PC-3 (cell line): ENCODE measurements at regions of chr18 and their contacts with region 1.

Region 1: DNA sequence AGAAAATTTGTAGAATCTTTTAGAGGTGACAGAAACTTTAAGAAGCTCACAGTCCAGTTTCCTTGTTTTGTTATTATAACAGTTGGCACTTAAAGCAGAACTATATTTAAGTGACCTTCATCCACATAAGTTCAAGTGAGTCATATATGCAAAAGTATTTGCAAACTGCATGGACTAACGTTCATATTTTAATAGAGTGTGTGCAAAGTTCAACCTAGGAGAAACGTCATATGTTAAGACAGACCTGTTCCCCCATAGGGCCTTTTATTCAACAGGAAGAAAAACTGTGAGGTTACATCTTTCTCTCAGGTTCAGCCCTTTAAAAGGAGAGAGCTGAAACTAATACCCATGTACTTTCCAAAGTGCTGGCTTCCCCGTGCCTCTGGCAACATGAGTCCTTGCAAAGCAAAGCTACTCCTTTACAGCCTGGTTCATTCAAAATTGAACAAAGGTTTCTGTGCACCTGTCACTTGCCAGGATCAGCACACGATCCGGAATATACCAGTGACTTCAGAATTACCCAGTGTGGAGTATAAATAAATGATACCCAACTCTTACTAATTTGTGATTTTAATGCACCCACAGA is 280.0 kb upstream of the RAB12 start:
- DNase-seq: peak; percentile 86
- ATAC-seq: peak; percentile 94
- H3K4me3 ChIP-seq: no peak overlapping the region
- H3K27ac ChIP-seq: peak overlapping the region; percentile 52
- H3K4me1 ChIP-seq: peaks cover 39% of the 10 kb centered on the region
- H3K27me3 ChIP-seq: no peaks in the 10 kb centered on the region
- CTCF ChIP-seq: no peak

Region 2: DNA sequence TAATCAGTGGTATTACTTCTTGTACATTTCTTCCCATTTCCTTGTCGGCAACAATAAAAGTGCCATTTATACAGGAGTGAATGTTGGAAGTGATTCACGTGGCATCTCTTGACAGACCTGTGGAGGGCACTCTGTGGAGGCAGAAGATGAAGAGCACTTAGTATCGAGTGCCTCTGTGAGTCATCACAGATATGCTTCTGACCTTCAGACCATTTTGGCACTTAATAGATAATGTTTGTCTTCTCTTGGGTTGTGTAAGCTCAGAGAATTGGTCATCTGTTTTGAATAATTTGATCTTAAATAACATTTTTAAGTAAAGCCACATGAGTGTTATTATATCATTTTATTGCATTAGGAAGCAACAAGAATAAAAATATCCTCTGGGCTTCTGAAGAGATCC is 456.7 kb before region 1 on chr18:
- CTCF ChIA-PET with region 1: no interaction called
- POLR2A ChIA-PET with region 1: no interaction called
- intact Hi-C with region 1: loop called (anchors 10 kb)
- DNase-seq: peak; percentile 79
- ATAC-seq: peak; percentile 82
- H3K4me3 ChIP-seq: no peak overlapping the region
- H3K27ac ChIP-seq: peak overlapping the region; percentile 83
- H3K4me1 ChIP-seq: peaks cover 33% of the 10 kb centered on the region
- H3K27me3 ChIP-seq: no peaks in the 10 kb centered on the region
- CTCF ChIP-seq: peak; percentile 72

Region 3: DNA sequence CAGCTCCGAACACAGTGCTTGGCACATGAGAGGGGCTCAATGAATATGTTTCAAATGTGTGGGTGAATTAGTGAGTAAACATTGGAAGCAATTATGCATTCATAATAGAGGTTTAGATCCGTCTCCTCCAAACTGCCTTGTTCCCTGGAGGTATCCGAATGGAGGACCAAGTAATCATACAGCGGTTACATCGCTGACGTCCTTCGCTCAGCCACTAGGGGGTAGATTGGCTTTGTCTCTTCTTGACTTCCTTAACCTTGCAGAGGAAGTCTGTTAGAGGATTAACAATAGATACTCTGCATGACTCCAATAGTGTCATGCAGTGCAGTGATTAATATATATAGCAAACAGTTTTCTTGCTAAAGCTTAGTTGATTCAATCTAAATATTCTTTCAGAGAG is 245.1 kb before region 1 on chr18:
- CTCF ChIA-PET with region 1: no interaction called
- POLR2A ChIA-PET with region 1: interaction called, 6 read pairs
- intact Hi-C with region 1: loop called (anchors 10 kb)
- DNase-seq: peak; percentile 82
- ATAC-seq: peak; percentile 97
- H3K4me3 ChIP-seq: no peak overlapping the region
- H3K27ac ChIP-seq: no peak overlapping the region
- H3K4me1 ChIP-seq: peaks cover 4% of the 10 kb centered on the region; the same call in 1 of the 2 replicates
- H3K27me3 ChIP-seq: no peaks in the 10 kb centered on the region
- CTCF ChIP-seq: peak; percentile 93

Region 4: GRCh38 chr18:8116346-8117005 is 212.8 kb before region 1 on chr18:
- CTCF ChIA-PET with region 1: no interaction called
- POLR2A ChIA-PET with region 1: no interaction called
- intact Hi-C with region 1: loop called (anchors 10 kb)
- DNase-seq: peak; percentile 93
- ATAC-seq: peak; percentile 99
- H3K4me3 ChIP-seq: peak overlapping the region; percentile 31; the same call in 1 of the 2 replicates
- H3K27ac ChIP-seq: peak overlapping the region; percentile 93
- H3K4me1 ChIP-seq: peaks cover 32% of the 10 kb centered on the region
- H3K27me3 ChIP-seq: no peaks in the 10 kb centered on the region
- CTCF ChIP-seq: no peak

Region 5: GRCh38 chr18:8341481-8342230 is 12.4 kb after region 1 on chr18:
- CTCF ChIA-PET with region 1: no interaction called
- POLR2A ChIA-PET with region 1: interaction called, 3 read pairs
- intact Hi-C with region 1: loop called (anchors 1 kb)
- DNase-seq: peak; percentile 75
- ATAC-seq: peak; percentile 82
- H3K4me3 ChIP-seq: no peak overlapping the region
- H3K27ac ChIP-seq: peak overlapping the region; percentile 86
- H3K4me1 ChIP-seq: peaks cover 26% of the 10 kb centered on the region
- H3K27me3 ChIP-seq: no peaks in the 10 kb centered on the region
- CTCF ChIP-seq: no peak

Region 6: DNA sequence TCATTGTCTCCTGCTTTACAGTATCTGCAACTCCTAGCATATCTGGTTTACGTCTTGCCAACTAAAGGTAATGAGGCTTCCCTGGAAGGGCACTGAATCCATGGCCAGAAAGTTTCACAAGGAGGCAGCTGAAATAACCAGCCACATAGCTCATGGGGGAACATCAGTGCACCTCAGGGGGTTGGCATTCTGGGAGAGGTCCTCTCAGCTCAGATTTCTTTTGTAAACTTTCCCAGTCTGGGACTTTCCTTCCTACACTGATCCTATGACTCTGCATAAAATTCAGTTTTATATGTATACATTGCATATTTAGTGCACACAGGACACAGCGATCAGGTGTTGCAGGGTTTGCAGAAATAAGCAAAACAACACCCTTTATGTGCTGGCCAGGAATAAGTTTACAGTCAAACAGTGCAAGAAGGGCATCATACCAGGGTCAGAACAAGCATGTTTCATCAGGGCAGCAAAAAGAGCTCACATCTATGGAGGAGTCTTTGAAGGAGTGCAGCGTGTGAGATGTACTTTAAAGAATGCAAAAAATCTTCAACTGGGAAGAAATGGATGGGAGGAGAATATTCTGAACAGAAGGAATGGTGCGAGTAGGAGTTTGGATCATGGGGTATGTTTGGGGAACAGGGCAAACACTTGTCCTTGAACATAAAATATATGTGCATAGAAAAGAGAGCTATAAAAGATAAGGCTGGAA is 39.4 kb after region 1 on chr18:
- CTCF ChIA-PET with region 1: no interaction called
- POLR2A ChIA-PET with region 1: no interaction called
- intact Hi-C with region 1: loop called (anchors 2 kb)
- DNase-seq: no peak
- ATAC-seq: no peak
- H3K4me3 ChIP-seq: no peak overlapping the region
- H3K27ac ChIP-seq: no peak overlapping the region
- H3K4me1 ChIP-seq: no peaks in the 10 kb centered on the region
- H3K27me3 ChIP-seq: no peaks in the 10 kb centered on the region
- CTCF ChIP-seq: no peak

Region 7: DNA sequence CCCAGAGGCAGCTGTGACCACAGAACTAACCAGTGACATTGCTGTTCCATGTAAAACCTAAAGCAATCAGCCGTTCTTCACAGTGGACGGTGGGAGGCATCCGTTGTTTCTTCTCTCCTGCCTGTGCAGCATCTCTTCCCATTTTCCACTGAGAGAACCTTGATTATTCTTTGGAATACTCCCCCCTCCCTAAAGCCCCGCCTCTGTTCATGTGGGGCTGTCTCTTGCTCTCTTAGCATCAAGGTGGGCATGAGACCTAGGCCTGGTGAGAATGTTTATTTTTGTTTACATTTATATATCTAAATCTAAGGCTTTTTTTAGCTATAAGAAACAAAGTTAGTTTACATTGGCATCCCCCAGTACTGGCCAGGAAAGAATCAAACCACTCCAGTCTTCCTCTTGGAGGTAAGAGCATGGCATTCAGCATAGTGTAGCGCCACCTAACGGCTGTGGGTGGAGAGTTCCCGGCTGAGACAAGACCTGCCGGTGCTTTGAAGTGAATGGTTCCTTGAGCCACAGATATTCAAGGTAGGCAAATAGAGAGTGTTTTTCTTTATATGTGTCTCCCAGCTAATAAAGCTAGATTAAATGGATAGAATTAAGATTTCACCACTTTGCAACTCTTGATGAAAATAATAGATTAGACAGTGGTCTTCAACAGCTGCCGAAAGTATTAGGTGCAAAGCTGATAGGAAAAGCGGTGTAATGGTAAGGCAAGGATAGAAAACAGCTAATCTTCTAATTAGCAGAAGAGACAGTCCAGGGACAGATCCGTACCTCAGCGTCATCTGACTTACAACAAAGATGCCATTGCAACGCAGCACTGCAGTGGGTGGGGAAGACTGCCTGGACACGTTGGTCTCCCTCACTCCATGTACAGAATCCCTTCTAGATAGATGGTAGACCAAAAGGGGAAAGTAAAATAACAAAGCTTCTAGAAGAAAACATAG is 60.4 kb after region 1 on chr18:
- CTCF ChIA-PET with region 1: interaction called, 4 read pairs
- POLR2A ChIA-PET with region 1: no interaction called
- intact Hi-C with region 1: loop called (anchors 5 kb)
- DNase-seq: peak; percentile 86
- ATAC-seq: peak; percentile 100
- H3K4me3 ChIP-seq: no peak overlapping the region
- H3K27ac ChIP-seq: no peak overlapping the region
- H3K4me1 ChIP-seq: no peaks in the 10 kb centered on the region
- H3K27me3 ChIP-seq: no peaks in the 10 kb centered on the region
- CTCF ChIP-seq: peak; percentile 97

Region 8: DNA sequence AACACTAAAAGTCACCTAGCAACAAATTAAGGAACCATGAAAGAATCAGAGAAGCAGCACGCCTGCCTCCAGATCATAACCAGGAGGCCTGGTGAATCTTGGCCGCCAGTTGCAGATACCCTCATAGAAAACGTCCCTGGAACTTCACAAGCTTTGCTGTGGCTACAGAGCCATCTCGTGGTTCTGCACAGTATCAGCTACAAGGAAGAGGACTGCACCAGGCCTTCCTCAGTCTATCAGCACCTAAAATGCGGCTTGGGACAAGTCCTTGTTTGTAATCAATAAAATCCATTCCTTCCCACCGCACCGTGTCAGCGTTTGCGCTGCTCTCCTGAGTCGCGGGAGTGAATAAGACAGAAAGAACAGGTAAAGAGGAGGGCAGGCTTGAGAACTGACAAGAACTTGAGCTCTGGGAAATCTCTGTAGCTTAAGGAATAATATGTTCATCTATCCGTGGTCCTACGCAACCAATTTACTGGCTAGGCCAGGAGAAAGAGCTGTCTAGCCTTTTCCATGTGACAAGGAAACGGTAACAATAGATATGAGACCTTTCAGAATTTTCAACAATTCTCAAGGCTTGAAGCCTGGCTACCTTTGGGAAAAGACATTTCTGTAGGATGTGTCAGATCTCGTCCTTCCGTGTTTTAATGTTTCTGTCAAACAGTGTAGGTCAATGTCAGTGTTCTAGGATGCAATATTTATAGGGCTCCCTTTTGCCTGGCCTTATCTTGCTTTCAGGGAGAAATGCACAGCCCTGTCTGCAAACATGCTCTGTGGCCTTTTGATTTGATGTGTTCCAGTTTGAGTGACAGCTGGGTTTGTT is 151.4 kb after region 1 on chr18:
- CTCF ChIA-PET with region 1: no interaction called
- POLR2A ChIA-PET with region 1: no interaction called
- intact Hi-C with region 1: no loop called
- DNase-seq: peak; percentile 81
- ATAC-seq: peak; percentile 91
- H3K4me3 ChIP-seq: no peak overlapping the region
- H3K27ac ChIP-seq: no peak overlapping the region
- H3K4me1 ChIP-seq: no peaks in the 10 kb centered on the region
- H3K27me3 ChIP-seq: no peaks in the 10 kb centered on the region
- CTCF ChIP-seq: peak; percentile 88